A673 (cell line): ENCODE measurements at regions of chr11 and their contacts with region 1.

Region 1: GRCh38 chr11:72058416-72059034 is 21.8 kb downstream of the NUMA1 start:
- DNase-seq: no peak
- H3K4me3 ChIP-seq: no peak overlapping the region
- H3K27ac ChIP-seq: no peak overlapping the region
- H3K4me1 ChIP-seq: peaks cover 5% of the 10 kb centered on the region
- H3K27me3 ChIP-seq: no peaks in the 10 kb centered on the region
- CTCF ChIP-seq: no peak

Region 2: GRCh38 chr11:70281156-70281609 is 1777.3 kb before region 1 on chr11:
- CTCF ChIA-PET with region 1: no interaction called
- POLR2A ChIA-PET with region 1: no interaction called
- intact Hi-C with region 1: no loop called
- DNase-seq: no peak
- H3K4me3 ChIP-seq: no peak overlapping the region
- H3K27ac ChIP-seq: peak overlapping the region; percentile 61
- H3K4me1 ChIP-seq: no peaks in the 10 kb centered on the region
- H3K27me3 ChIP-seq: no peaks in the 10 kb centered on the region
- CTCF ChIP-seq: no peak

Region 3: GRCh38 chr11:72040726-72041441 is 17.6 kb before region 1 on chr11:
- CTCF ChIA-PET with region 1: interaction called, 3 read pairs
- POLR2A ChIA-PET with region 1: no interaction called
- intact Hi-C with region 1: loop called (anchors 2 kb)
- DNase-seq: peak; percentile 96
- H3K4me3 ChIP-seq: peak overlapping the region; percentile 51
- H3K27ac ChIP-seq: peak overlapping the region; percentile 90
- H3K4me1 ChIP-seq: peaks cover 48% of the 10 kb centered on the region
- H3K27me3 ChIP-seq: no peaks in the 10 kb centered on the region
- CTCF ChIP-seq: no peak